Right lobe of liver (tissue), 6 donors: ENCODE measurements at regions of chr10 and their contacts with region 1.

Region 1: DNA sequence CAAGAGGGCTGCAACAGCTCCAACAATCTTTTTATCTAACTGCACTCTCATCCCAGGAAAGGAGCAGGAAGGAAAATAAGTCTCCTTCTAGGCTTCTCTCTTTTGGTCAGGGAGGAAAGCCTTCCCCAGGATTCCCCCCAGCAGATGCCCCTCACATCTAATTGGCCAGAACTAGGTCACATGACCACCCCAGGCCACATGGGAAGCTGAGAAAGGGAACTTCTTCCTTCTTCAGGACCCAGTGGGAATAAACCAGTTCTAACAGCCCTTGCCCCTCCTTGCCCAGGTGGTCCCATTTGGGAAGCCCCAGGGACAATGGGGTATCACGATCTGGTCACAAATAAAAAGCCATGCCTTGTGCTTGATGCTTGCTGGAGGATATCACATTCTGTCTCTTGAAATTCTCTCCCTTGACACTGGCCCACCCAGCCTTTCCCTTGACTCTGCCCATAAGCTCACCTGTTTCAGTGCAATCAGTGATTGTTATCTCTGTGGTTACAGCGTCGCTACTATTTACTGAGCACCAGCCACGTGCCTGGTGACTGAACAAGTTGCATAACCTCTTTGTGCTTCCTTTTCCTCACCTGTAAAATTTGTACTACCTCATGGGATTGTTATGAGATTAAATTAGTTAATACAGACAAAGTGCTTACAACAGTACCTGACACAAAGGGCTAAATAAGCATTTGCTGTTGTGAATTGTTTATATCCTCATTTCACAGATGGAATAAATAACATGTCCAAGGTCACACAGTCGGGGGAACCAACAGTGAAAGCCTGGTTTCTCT is 9.0 kb upstream of the TACR2 start:
- DNase-seq: no peak
- ATAC-seq: peak; percentile 72 to 88 (median 78)
- H3K4me3 ChIP-seq: no peak overlapping the region
- H3K27ac ChIP-seq: no peak overlapping the region
- H3K4me1 ChIP-seq: peaks cover 0 to 9% (median 0%) of the 10 kb centered on the region in 4 donors
- H3K27me3 ChIP-seq: no peaks in the 10 kb centered on the region
- CTCF ChIP-seq: no peak
- POLR2A ChIP-seq: no peak

Region 2: GRCh38 chr10:69503001-69503895 is 77.5 kb after region 1 on chr10:
- intact Hi-C with region 1: loop called in 1 of 2 experiments (anchors 5 kb)
- DNase-seq: no peak
- ATAC-seq: no peak
- H3K4me3 ChIP-seq: no peak overlapping the region
- H3K27ac ChIP-seq: no peak overlapping the region
- H3K4me1 ChIP-seq: no peaks in the 10 kb centered on the region
- H3K27me3 ChIP-seq: no peaks in the 10 kb centered on the region
- CTCF ChIP-seq: no peak
- POLR2A ChIP-seq: no peak

Region 3: DNA sequence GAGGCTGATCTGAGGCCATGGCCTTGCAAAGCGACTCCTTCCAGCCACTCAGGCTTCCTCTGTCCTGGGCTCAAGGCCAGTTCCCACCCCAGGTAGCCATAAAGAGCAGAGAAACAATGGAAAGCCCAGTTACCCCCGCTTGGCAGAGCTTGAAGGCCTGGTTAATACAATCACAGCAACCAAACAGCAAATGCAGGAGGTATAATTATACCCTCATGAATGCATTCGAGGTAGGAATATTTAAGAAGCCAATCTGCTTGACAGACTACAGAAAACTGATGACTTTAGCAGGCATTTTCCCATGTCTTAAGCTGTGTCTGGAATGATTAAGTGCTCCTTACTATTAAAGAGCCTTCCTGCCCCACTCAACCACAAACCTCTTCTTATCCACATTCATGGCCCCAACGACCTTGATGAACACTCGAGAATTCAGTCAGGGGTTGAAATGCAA is 512.9 kb after region 1 on chr10:
- intact Hi-C with region 1: no loop called
- DNase-seq: no peak
- ATAC-seq: no peak
- H3K4me3 ChIP-seq: no peak overlapping the region
- H3K27ac ChIP-seq: no peak overlapping the region
- H3K4me1 ChIP-seq: no peaks in the 10 kb centered on the region
- H3K27me3 ChIP-seq: no peaks in the 10 kb centered on the region
- CTCF ChIP-seq: no peak
- POLR2A ChIP-seq: no peak

Region 4: GRCh38 chr10:70096705-70097420 is 671.2 kb after region 1 on chr10:
- intact Hi-C with region 1: no loop called
- DNase-seq: no peak
- ATAC-seq: peak in 3 of 4 donors; percentile 50 to 85 (median 55)
- H3K4me3 ChIP-seq: no peak overlapping the region
- H3K27ac ChIP-seq: no peak overlapping the region
- H3K4me1 ChIP-seq: peaks cover 0 to 10% (median 2%) of the 10 kb centered on the region in 4 donors
- H3K27me3 ChIP-seq: no peaks in the 10 kb centered on the region
- CTCF ChIP-seq: no peak
- POLR2A ChIP-seq: no peak